ENCODE measurements at regions of chr4 and their contacts with region 1.

Region 1: DNA sequence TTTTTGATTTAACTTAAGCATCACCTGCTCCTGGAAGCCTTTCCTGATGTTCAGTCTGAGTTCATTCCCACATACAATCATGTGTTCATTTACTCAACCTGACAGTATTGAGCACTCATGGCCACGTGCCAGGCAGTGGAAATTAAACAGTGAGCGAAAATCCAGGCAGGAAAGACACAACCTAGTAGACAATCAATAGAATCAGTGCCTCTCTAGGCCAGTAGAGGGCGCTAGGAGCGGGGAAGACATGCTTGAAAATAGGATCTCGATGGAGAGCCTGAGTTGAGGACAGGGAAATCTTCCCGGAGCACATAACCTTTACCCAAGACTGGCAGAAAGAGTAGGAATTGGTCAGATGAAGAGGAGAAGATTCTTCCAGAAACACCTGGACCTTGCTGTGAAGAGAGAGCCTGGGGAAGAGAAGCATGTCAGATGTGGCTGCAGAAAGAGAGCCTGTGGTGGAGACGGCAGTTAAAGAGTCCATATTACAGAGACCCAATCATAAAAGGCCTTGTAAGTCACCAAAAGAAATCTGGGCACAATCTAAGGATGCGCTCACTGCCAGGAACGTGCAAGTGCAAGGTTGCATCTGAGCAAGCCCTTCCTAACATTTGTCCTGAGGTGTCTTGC is 103.5 kb downstream of the LDB2 start:
- H3K4me3 Mint-ChIP-seq: no peak overlapping the region
- H3K27ac Mint-ChIP-seq: no peak overlapping the region
- H3K4me1 Mint-ChIP-seq: no peaks in the 10 kb centered on the region
- H3K27me3 Mint-ChIP-seq: no peaks in the 10 kb centered on the region

Region 2: DNA sequence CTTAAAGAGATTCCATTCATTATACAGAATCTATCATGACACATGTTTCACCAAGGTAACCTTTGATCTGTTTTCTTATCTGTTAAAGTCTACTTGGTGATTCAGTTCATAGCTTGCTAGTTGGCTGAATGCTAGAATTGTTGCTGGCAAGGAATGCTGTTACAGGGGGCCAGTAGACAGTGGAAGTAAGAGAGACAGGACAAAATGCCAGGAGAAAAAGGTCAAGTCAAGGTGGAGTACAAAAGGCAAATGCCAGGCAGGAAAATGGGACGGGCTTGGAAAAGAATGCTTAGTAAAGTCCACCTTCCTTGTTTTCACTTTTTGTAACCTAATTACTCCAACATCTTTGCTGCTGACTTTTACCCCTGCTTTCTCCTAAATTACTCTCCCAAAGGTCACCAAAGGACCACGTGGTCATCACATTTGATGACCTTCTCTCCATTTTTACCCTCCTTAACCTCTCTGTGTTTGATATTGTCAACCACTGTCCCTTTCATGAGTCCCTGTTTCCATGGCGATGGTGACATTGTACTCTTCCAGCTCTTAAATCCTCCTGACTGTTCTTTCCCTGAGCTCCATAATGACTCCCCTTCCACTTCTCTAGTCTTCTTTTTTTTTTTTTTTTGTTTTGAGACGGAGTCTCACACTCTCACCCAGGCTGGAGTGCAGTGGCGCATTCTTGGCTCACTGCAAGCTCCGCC is 544.1 kb before region 1 on chr4:
- intact Hi-C with region 1: no loop called
- H3K4me3 Mint-ChIP-seq: no peak overlapping the region
- H3K27ac Mint-ChIP-seq: no peak overlapping the region
- H3K4me1 Mint-ChIP-seq: peaks cover 26% of the 10 kb centered on the region
- H3K27me3 Mint-ChIP-seq: no peaks in the 10 kb centered on the region

Region 3: DNA sequence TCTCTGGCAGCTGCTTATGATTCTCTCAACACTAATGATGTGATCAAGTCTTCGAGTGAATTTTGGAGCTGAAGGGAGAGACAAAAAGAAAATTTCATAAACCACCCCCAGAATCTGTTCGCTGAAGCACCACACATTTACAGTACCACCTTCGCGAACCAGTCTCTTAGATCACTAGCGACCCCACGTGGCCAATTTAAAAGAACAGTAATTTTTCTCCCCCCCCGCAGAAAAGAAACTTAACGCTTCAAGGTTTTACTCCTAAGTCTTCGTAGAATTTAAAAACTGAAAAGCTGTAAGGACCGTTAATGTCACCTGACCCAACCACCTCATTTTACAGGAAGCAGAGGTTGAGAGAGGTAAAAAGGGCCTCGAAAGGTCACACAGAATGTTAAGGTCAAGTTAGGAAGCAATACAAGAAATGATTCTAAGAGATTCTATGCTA is 529.5 kb after region 1 on chr4:
- intact Hi-C with region 1: loop called (anchors 5 kb)
- H3K4me3 Mint-ChIP-seq: no peak overlapping the region
- H3K27ac Mint-ChIP-seq: no peak overlapping the region
- H3K4me1 Mint-ChIP-seq: peaks cover 12% of the 10 kb centered on the region
- H3K27me3 Mint-ChIP-seq: peaks cover 2% of the 10 kb centered on the region